ENCODE measurements at regions of chr16 and their contacts with region 1.

Region 1: DNA sequence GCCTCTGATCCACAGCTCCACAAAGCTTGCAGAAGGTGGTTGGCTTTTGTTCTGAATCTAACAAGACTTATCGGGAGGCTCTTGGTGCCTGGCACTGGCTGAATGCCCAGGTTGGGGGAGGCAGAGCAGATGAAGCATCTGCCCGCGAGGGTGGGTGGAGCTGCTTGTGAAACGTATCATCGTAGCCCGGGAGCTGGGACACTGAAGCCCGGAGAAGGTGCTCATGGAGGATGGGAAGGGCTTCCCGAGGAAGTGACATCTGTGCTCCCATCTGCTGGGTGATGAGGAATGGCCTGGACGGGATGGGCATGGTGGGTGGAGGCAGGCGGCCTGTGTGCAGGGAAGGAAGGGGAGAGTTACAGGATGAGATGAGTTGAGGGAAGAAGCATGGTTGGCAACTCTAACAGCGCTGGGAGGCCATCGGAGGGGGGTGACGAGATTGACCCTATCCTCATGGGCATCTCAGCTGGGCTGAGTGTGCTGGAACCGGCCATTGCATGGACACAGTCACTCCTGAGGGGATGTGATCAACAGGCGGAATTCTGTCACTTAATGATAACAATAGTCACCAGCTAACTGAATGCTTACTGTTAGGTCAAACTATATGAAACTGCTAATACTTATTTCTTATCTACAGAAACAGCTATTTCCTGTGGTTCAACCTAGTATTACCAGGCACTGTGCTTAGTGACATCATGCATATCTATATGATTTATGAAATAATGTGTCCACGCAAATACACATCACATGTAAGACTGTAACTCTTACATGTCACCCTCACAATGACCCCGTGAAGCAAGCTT is 102.7 kb downstream of the ABCC6 start:
- H3K4me3 Mint-ChIP-seq: no peak overlapping the region
- H3K27ac Mint-ChIP-seq: no peak overlapping the region
- H3K4me1 Mint-ChIP-seq: no peaks in the 10 kb centered on the region
- H3K27me3 Mint-ChIP-seq: no peaks in the 10 kb centered on the region

Region 2: GRCh38 chr16:16086653-16087446 is 33.7 kb before region 1 on chr16:
- intact Hi-C with region 1: loop called (anchors 5 kb)
- H3K4me3 Mint-ChIP-seq: no peak overlapping the region
- H3K27ac Mint-ChIP-seq: no peak overlapping the region
- H3K4me1 Mint-ChIP-seq: no peaks in the 10 kb centered on the region
- H3K27me3 Mint-ChIP-seq: no peaks in the 10 kb centered on the region

Region 3: DNA sequence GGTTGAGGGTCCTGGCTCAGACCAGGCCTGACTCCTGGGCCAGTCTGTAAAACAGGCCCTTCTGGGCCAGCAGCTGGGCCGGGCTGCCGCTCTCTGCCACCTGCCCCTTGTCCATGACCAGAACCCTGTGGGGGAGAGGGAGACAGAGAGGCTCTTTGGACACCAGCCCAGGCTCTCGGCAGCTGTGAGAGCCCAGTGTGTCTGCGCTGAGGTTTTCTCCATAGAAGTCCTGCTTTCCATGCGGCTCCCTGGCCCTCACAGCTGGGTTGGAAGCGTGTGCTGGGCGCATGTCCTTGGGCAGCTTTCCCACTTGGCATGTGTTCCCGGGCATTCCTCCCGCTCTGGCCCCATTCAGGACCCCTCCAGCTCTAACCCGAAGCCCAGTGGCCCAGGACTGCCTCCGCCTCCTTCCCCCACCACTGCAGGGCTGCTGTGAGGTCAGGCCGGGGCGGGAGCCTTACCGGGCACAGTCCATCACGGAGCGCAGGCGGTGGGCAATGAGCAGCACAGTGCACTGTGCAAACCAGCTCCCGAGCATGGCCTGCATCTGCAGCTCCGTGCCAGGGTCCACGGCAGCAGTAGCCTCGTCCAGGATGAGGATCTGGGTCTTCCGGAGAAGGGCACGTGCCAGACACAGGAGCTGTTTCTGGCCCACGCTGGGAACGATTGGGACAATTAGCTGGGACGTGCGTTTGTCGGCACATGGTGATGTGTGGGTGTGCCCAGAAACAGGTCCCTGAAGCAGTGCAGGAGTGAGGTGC is 29.7 kb after region 1 on chr16:
- intact Hi-C with region 1: no loop called
- H3K4me3 Mint-ChIP-seq: no peak overlapping the region
- H3K27ac Mint-ChIP-seq: no peak overlapping the region
- H3K4me1 Mint-ChIP-seq: no peaks in the 10 kb centered on the region
- H3K27me3 Mint-ChIP-seq: no peaks in the 10 kb centered on the region

Measured in dendritic cell treated with granulocyte-macrophage colony-stimulating factor and Interleukin-4, amounts not matched to agents 40 ng/mL and 50 ng/mL, for 4 days (primary cell).